SK-N-SH (cell line): ENCODE measurements at regions of chr6 and their contacts with region 1.

Region 1: GRCh38 chr6:51569594-51569993 is 517.8 kb downstream of the PKHD1 start:
- DNase-seq: no peak
- H3K4me3 ChIP-seq: no peak overlapping the region
- H3K27ac ChIP-seq: peak overlapping the region in 1 of 2 experiments; percentile 88; a peak in 2 of 4 replicates
- H3K4me1 ChIP-seq: peaks cover 0 to 16% of the 10 kb centered on the region in 2 experiments; a peak in 2 of 4 replicates
- H3K27me3 ChIP-seq: no peaks in the 10 kb centered on the region; the same call in 1 of the 2 replicates
- CTCF ChIP-seq: no peak
- EP300 ChIP-seq: no peak
- RAD21 ChIP-seq: peak; percentile 68

Region 2: GRCh38 chr6:51513891-51514747 is 55.5 kb before region 1 on chr6:
- CTCF ChIA-PET with region 1: no interaction called
- POLR2A ChIA-PET with region 1: no interaction called
- DNase-seq: no peak
- H3K4me3 ChIP-seq: no peak overlapping the region
- H3K27ac ChIP-seq: peak overlapping the region in 1 of 2 experiments; percentile 16; a peak in 2 of 4 replicates
- H3K4me1 ChIP-seq: peaks cover 0 to 7% of the 10 kb centered on the region in 2 experiments; a peak in 1 of 4 replicates
- H3K27me3 ChIP-seq: no peaks in the 10 kb centered on the region
- CTCF ChIP-seq: no peak
- EP300 ChIP-seq: no peak
- RAD21 ChIP-seq: no peak

Region 3: GRCh38 chr6:51553246-51554015 is 16.2 kb before region 1 on chr6:
- CTCF ChIA-PET with region 1: interaction called, 12 read pairs
- POLR2A ChIA-PET with region 1: interaction called, 12 read pairs
- DNase-seq: peak; percentile 44
- H3K4me3 ChIP-seq: no peak overlapping the region
- H3K27ac ChIP-seq: peak overlapping the region in 1 of 2 experiments; percentile 99; a peak in 2 of 4 replicates
- H3K4me1 ChIP-seq: peaks cover 0 to 31% of the 10 kb centered on the region in 2 experiments; a peak in 2 of 4 replicates
- H3K27me3 ChIP-seq: no peaks in the 10 kb centered on the region
- CTCF ChIP-seq: no peak
- EP300 ChIP-seq: peak in 1 of 2 experiments; percentile 98; a peak in 2 of 4 replicates
- RAD21 ChIP-seq: peak; percentile 42

Region 4: DNA sequence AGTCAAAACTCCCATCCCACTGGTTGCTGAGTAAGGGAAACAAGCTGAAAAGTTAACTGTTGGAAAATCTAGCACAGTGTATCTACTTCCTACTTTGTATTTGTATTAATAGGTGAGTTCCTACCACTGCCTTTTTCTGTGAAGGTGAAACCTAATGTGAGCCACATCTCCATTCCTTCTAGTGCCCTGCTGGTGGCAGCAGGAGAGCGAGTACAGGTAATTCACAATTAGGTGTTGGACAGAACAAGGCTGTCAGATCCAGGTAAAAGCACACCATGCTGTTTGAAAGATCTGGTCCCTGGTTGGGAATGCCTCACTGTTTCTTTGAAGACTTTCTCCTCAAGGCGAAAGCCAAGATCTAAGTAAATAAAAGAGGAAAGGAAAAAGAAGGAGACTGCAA is 10.5 kb before region 1 on chr6:
- CTCF ChIA-PET with region 1: interaction called, 12 read pairs
- POLR2A ChIA-PET with region 1: interaction called, 12 read pairs
- DNase-seq: no peak
- H3K4me3 ChIP-seq: no peak overlapping the region
- H3K27ac ChIP-seq: no peak overlapping the region
- H3K4me1 ChIP-seq: peaks cover 0 to 10% of the 10 kb centered on the region in 2 experiments; a peak in 2 of 4 replicates
- H3K27me3 ChIP-seq: no peaks in the 10 kb centered on the region
- CTCF ChIP-seq: no peak
- EP300 ChIP-seq: no peak
- RAD21 ChIP-seq: no peak